HCT116 (cell line): ENCODE measurements at regions of chr9 and their contacts with region 1.

Region 1: GRCh38 chr9:121992571-121993212 is 100.4 kb downstream of the TTLL11 start:
- DNase-seq: peak; percentile 69
- ATAC-seq: peak; percentile 90
- H3K4me3 ChIP-seq: no peak overlapping the region
- H3K27ac ChIP-seq: no peak overlapping the region
- H3K4me1 ChIP-seq: no peaks in the 10 kb centered on the region
- H3K27me3 ChIP-seq: no peaks in the 10 kb centered on the region
- CTCF ChIP-seq: peak; percentile 66 to 90 (median 90)
- POLR2A ChIP-seq: no peak
- RAD21 ChIP-seq: peak; percentile 93

Region 2: GRCh38 chr9:121538246-121538645 is 454.4 kb before region 1 on chr9:
- CTCF ChIA-PET with region 1: no interaction called
- POLR2A ChIA-PET with region 1: no interaction called
- RAD21 ChIA-PET with region 1: no interaction called
- intact Hi-C with region 1: no loop called
- DNase-seq: peak; percentile 48
- ATAC-seq: peak; percentile 97
- H3K4me3 ChIP-seq: no peak overlapping the region
- H3K27ac ChIP-seq: no peak overlapping the region
- H3K4me1 ChIP-seq: no peaks in the 10 kb centered on the region; a peak in 1 of 4 replicates
- H3K27me3 ChIP-seq: no peaks in the 10 kb centered on the region
- CTCF ChIP-seq: peak; percentile 37 to 73 (median 47); a peak in 5 of 6 replicates
- POLR2A ChIP-seq: no peak
- RAD21 ChIP-seq: peak; percentile 84

Region 3: GRCh38 chr9:121634329-121635261 is 358.1 kb before region 1 on chr9:
- CTCF ChIA-PET with region 1: no interaction called
- POLR2A ChIA-PET with region 1: no interaction called
- RAD21 ChIA-PET with region 1: no interaction called
- intact Hi-C with region 1: loop called (anchors 1 kb)
- DNase-seq: no peak
- ATAC-seq: peak; percentile 84
- H3K4me3 ChIP-seq: no peak overlapping the region
- H3K27ac ChIP-seq: no peak overlapping the region; the same call in 1 of the 2 replicates
- H3K4me1 ChIP-seq: peaks cover 16 to 25% of the 10 kb centered on the region in 2 experiments
- H3K27me3 ChIP-seq: no peaks in the 10 kb centered on the region
- CTCF ChIP-seq: peak; percentile 52 to 59 (median 57); a peak in 5 of 6 replicates
- POLR2A ChIP-seq: no peak
- RAD21 ChIP-seq: peak; percentile 74

Region 4: GRCh38 chr9:121698627-121699570 is 293.8 kb before region 1 on chr9:
- CTCF ChIA-PET with region 1: no interaction called
- POLR2A ChIA-PET with region 1: no interaction called
- RAD21 ChIA-PET with region 1: no interaction called
- intact Hi-C with region 1: loop called (anchors 5 kb)
- DNase-seq: no peak
- ATAC-seq: peak; percentile 74
- H3K4me3 ChIP-seq: peak overlapping the region; percentile 70 to 73
- H3K27ac ChIP-seq: peak overlapping the region; percentile 64; the same call in 1 of the 2 replicates
- H3K4me1 ChIP-seq: peaks cover 2 to 17% of the 10 kb centered on the region in 2 experiments; a peak in 3 of 4 replicates
- H3K27me3 ChIP-seq: no peaks in the 10 kb centered on the region
- CTCF ChIP-seq: no peak
- POLR2A ChIP-seq: no peak
- RAD21 ChIP-seq: no peak

Region 5: DNA sequence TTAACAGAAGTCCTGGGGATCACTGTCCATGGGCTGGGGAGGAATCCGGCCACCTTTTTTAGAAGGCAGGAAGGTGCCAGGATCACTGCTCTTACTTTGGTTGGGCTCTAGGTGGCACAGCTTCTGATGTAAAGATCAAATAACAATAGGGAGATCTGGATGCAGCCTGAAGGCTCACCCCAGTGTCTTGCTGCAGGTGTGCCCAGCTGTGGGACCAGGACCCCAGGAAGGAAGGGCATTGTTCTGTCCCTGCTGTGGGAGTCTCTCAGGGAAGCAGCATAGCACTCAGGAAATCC is 271.7 kb before region 1 on chr9:
- CTCF ChIA-PET with region 1: no interaction called
- POLR2A ChIA-PET with region 1: no interaction called
- RAD21 ChIA-PET with region 1: no interaction called
- intact Hi-C with region 1: loop called (anchors 1 kb)
- DNase-seq: no peak
- ATAC-seq: peak; percentile 68
- H3K4me3 ChIP-seq: no peak overlapping the region
- H3K27ac ChIP-seq: no peak overlapping the region
- H3K4me1 ChIP-seq: peaks cover 19 to 26% of the 10 kb centered on the region in 2 experiments
- H3K27me3 ChIP-seq: no peaks in the 10 kb centered on the region
- CTCF ChIP-seq: peak; percentile 17 to 34 (median 25); a peak in 2 of 6 replicates
- POLR2A ChIP-seq: no peak
- RAD21 ChIP-seq: no peak; the same call in 1 of the 2 replicates

Region 6: DNA sequence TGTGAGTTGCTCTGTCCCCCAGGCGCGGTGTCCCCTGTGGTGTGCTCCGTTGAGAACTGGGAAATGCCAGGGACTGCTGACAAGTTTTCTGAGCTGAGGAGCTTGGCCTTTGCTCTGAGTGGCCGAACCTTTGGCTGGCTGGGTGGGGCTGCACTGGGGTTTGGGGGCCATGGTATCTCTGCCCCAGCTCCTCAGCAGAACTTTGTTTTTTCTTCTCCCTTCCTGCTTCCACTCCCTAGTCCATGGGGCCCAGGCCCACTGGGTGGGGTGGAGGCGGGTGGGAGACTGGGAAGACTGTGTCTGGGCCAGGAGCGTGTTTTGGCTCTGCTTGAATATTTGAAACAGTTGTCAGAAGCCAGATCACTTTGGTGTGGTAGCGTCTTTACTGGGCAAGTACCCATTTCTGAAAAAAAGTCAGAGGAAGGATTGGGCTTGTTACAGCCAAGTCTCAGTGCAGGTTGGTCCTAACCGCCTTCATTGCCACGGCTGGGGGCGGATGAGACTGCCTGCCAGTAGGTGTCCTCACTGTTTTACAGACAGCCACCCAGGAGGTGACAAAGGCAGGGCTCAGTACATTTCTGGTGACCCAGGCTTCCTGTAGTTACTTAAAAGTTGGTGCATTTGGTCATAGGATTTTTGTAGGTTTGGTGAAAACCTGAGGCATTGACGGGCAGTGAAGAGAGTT is 248.5 kb before region 1 on chr9:
- CTCF ChIA-PET with region 1: no interaction called
- POLR2A ChIA-PET with region 1: no interaction called
- RAD21 ChIA-PET with region 1: no interaction called
- intact Hi-C with region 1: loop called (anchors 5 kb)
- DNase-seq: no peak
- ATAC-seq: peak; percentile 72
- H3K4me3 ChIP-seq: peak overlapping the region; percentile 38 to 39
- H3K27ac ChIP-seq: peak overlapping the region; percentile 52
- H3K4me1 ChIP-seq: peaks cover 46 to 67% of the 10 kb centered on the region in 2 experiments
- H3K27me3 ChIP-seq: no peaks in the 10 kb centered on the region
- CTCF ChIP-seq: peak in 2 of 3 experiments; percentile 63 to 64; a peak in 4 of 6 replicates
- POLR2A ChIP-seq: no peak
- RAD21 ChIP-seq: no peak

Region 7: DNA sequence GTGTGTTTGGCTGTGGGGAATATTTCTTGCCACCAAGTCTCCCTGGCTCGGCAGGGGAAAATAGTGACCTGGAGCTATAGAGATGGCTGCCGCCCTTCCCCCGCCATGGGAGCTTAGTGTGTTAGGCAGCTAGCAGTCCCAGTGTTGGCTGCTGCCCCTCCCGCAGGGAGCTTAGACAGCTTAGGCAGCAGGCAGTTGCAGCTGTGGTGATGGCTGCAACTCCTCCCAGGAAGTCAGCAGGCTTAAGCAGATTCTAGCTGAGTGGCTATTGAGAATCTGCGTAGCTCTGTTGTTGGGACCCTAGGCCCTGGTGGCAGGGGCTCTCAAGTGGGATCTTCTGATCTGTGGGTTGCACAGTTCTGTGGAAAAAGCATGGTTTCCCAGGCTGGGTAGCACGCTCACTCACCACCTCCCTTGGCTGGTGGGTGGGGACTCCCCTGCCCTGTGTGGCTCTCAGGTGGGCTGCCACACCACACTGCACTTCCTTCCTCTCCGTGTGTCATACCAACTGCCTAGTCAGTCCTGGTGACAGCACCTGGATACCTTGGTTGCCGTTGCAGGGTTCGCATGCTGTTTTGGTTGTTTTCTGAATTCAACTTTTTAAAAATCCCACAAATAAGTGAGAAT is 569.6 kb after region 1 on chr9:
- CTCF ChIA-PET with region 1: no interaction called
- POLR2A ChIA-PET with region 1: no interaction called
- RAD21 ChIA-PET with region 1: no interaction called
- intact Hi-C with region 1: no loop called
- DNase-seq: no peak
- ATAC-seq: no peak
- H3K4me3 ChIP-seq: no peak overlapping the region
- H3K27ac ChIP-seq: no peak overlapping the region
- H3K4me1 ChIP-seq: no peaks in the 10 kb centered on the region
- H3K27me3 ChIP-seq: peaks cover 6% of the 10 kb centered on the region
- CTCF ChIP-seq: no peak
- POLR2A ChIP-seq: no peak
- RAD21 ChIP-seq: no peak

Region 8: DNA sequence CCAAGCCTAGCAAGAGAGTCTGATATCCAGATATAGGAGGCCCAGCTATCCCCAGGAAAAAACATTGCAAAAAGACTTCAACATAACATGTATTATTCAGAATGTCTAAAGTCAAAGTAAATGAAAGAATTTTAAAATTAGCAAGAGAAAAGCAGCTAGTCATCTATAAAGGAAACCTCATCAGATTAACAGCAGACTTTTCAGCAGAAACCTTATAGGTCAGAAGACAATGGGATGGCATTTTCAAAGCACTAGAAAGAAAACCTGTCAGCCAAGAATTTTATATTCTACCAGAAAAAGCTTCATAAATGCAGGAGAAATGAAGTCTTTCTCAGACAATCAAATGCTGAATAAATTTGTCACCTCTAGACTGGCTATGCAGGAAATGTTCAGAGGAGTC is 692.2 kb after region 1 on chr9:
- CTCF ChIA-PET with region 1: no interaction called
- POLR2A ChIA-PET with region 1: no interaction called
- RAD21 ChIA-PET with region 1: no interaction called
- intact Hi-C with region 1: no loop called
- DNase-seq: no peak
- ATAC-seq: no peak
- H3K4me3 ChIP-seq: no peak overlapping the region
- H3K27ac ChIP-seq: no peak overlapping the region
- H3K4me1 ChIP-seq: no peaks in the 10 kb centered on the region
- H3K27me3 ChIP-seq: no peaks in the 10 kb centered on the region
- CTCF ChIP-seq: no peak
- POLR2A ChIP-seq: no peak
- RAD21 ChIP-seq: no peak